Psoas muscle (tissue), 8 donors: ENCODE measurements at regions of chr22 and their contacts with region 1.

Region 1: GRCh38 chr22:27617214-27617881 is 184.2 kb downstream of the MN1 start:
- DNase-seq: no peak
- ATAC-seq: no peak
- H3K4me3 ChIP-seq: no peak overlapping the region
- H3K27ac ChIP-seq: no peak overlapping the region
- H3K4me1 ChIP-seq: no peaks in the 10 kb centered on the region
- H3K27me3 ChIP-seq: peaks cover 0 to 3% (median 0%) of the 10 kb centered on the region in 3 donors
- CTCF ChIP-seq: no peak

Region 2: DNA sequence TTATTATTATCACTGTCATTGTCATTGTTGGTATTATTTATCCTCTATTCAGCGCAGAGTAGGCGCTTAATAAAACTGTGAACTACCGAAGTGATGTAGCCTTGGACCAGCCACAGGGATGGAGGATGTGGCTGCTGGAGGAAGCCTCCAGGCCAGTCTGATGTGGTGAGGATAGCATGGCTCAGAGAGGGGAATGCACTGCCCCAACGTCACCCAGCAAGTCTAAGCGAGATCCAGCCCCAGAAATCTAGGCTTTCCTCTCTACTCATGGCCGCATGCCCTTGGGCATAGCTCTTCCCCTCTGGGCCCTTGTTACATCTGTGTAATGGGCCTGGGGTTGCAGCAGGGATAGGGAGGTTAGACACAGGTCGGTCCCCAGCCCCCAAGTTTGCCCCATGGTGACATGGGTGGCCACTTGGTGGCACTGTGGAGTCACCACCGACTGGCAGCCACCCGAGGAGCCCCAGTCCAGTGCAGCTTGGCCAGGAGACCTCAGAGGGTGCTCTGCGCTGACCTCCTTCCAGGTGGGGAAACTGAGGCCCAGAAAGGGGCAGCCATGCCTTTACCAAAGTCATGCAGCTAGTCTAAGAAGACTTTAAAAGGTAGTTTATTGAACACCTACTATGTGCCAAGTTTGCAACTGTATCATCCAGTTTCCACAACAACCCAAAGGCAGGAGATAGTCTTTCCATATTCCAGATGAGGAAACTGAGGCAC is 211.5 kb before region 1 on chr22:
- intact Hi-C with region 1: loop called in 1 of 2 experiments (anchors 10 kb)
- DNase-seq: peak; percentile 65 to 78
- ATAC-seq: peak; percentile 83 to 94 (median 88)
- H3K4me3 ChIP-seq: no peak overlapping the region
- H3K27ac ChIP-seq: no peak overlapping the region
- H3K4me1 ChIP-seq: no peaks in the 10 kb centered on the region
- H3K27me3 ChIP-seq: peaks cover 0 to 7% (median 0%) of the 10 kb centered on the region in 3 donors
- CTCF ChIP-seq: peak; percentile 78